ENCODE measurements at regions of chr6 and their contacts with region 1.

Region 1: DNA sequence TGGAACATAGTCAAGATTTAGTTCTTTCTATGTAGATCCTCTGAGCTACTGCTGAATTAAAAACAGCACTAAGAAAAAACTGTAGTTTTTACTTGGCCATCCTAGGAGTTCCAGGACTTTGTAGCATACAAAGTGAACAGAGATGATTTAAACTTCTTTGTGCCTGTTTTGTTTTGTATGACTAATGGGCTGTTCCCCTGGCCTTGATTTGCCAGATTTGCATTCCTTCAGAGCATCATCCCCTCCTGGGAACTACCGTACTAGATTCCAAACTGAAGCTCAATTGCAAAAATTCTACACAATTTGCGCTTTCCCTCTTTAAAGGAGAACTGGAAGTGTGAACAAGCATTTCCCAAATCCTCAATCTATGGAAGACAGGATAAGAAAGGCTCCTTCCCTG is 23.1 kb downstream of the ACOT13 start:
- DNase-seq: no peak
- ATAC-seq: peak in 1 of 8 donors; percentile 55
- H3K4me3 ChIP-seq: no peak overlapping the region
- H3K27ac ChIP-seq: no peak overlapping the region
- H3K4me1 ChIP-seq: peaks cover 0 to 23% (median 12%) of the 10 kb centered on the region in 9 donors
- H3K27me3 ChIP-seq: no peaks in the 10 kb centered on the region
- CTCF ChIP-seq: no peak

Region 2: GRCh38 chr6:24520929-24521546 is 168.9 kb before region 1 on chr6:
- intact Hi-C with region 1: loop called in 1 of 10 experiments (anchors 10 kb)
- DNase-seq: peak; percentile 14 to 33
- ATAC-seq: peak in 7 of 8 donors; percentile 65 to 85 (median 77)
- H3K4me3 ChIP-seq: no peak overlapping the region
- H3K27ac ChIP-seq: no peak overlapping the region
- H3K4me1 ChIP-seq: no peaks in the 10 kb centered on the region
- H3K27me3 ChIP-seq: no peaks in the 10 kb centered on the region
- CTCF ChIP-seq: peak in 8 of 9 donors; percentile 19 to 76 (median 55)

Region 3: DNA sequence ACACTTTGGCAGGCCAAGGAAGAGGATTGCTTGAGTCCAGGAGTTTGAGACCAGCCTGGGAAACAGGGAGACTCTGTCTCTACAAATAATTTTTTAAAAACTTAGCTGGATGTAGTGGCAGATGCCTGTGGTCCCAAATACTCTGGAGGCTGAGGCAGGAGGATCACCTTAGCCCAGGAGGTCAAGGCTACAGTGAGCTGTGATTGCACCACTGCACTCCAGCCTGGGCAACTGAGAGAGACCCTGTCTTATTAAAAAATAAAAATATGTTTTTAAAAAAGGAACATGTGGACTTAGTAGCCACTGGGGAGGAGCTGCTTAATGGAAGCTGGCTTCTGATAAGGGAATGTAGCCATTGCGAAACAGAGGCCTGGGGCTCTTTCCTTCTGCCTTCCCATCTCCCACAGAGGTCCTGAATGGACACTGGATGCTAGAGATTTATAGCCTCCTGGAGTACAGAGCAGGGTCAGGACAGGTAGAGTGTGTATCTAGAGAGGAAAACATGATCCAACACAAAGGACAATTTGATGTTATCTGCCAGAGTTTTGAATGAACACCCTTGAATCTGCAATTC is 63.0 kb after region 1 on chr6:
- intact Hi-C with region 1: no loop called
- DNase-seq: no peak
- ATAC-seq: no peak
- H3K4me3 ChIP-seq: no peak overlapping the region
- H3K27ac ChIP-seq: no peak overlapping the region
- H3K4me1 ChIP-seq: peaks cover 0 to 30% (median 0%) of the 10 kb centered on the region in 9 donors
- H3K27me3 ChIP-seq: no peaks in the 10 kb centered on the region
- CTCF ChIP-seq: no peak

Region 4: DNA sequence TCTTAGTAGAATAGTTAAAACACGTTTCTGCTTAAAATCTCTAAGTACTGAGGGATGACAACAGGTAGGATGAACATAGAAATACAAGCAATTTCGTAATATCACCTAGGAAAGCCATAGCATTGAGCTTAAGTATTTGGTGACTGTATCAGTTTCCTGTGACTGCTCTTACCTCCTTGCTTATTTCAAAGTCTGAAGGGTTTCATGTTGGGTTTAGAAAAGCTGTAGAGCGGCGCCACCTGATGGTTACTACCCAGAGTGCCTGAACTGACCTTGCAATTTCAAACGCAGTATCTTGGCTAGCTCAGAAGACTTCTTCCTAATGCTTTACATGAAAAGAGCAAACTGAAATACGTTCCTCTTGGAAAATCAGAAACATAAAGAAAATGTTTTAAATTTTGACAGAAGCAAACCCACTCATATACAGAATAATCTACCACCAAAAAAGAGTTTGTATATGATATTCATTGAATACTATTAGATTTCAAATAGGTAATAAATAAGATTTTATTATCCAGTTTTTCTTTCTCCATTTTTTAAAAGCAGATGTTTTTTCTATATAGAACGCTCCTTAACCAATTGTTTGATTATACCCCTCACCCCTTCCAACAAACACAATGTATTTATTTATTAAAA is 328.1 kb after region 1 on chr6:
- intact Hi-C with region 1: no loop called
- DNase-seq: peak; percentile 41 to 43
- ATAC-seq: peak in 3 of 8 donors; percentile 42 to 71 (median 49)
- H3K4me3 ChIP-seq: no peak overlapping the region
- H3K27ac ChIP-seq: peak overlapping the region in 1 of 10 donors; percentile 10
- H3K4me1 ChIP-seq: peaks cover 0 to 47% (median 8%) of the 10 kb centered on the region in 9 donors
- H3K27me3 ChIP-seq: peaks cover 0 to 8% (median 0%) of the 10 kb centered on the region in 7 donors
- CTCF ChIP-seq: peak in 7 of 9 donors; percentile 35 to 68 (median 53)